ENCODE measurements at regions of chr17 and their contacts with region 1.

Region 1: DNA sequence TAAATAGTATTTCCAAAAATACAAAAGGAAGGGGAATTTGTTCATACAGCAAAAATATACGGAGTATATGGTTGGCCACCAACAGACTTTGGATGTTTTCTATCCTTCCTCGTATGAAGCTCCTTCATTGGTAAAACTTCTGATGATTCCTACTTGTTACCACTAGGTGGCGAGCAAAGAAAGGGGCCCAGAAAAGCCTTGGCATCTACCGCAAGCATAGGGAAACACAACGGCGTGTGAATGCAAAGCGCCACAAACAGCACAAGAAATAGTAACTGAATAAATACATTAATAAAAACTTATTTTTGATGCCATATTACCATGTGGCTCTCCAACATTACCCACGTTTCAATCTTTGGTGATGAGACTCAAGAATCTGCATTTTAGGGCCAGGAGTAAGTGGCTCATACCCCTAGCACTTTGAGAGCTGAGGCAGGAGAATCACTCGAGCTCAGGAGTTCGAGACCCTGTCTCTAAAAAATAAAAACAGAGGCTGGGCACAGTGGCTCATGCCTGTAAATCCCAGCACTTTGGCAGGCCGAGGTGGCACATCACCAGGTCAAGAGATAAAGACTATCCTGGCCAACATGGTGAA is 34.5 kb downstream of the YWHAE start:
- DNase-seq: peak; percentile 46
- ATAC-seq: peak; percentile 81
- H3K4me3 ChIP-seq: no peak overlapping the region
- H3K27ac ChIP-seq: peak overlapping the region; percentile 37; the same call in 1 of the 2 replicates
- H3K4me1 ChIP-seq: peaks cover 33% of the 10 kb centered on the region
- H3K27me3 ChIP-seq: no peaks in the 10 kb centered on the region
- CTCF ChIP-seq: peak; percentile 86 to 91 (median 89)
- EP300 ChIP-seq: no peak
- POLR2A ChIP-seq: no peak
- RAD21 ChIP-seq: peak; percentile 92

Region 2: DNA sequence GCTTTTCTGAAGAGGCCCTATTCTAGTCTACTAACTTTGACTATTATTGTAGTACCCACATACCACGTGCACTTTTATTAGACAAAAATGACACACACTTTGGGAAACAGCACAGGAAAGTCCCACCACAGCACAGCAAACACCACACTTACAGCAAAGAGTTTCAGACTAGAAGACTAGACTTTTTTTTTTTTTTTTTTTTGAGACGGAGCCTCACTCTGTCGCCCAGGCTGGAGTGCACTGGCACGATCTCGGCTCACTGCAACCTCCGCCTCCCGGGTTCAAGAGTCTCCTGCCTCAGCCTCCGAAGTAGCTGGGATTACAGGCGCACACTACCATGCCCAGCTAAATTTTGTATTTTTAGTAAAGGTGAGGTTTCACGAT is 14.4 kb after region 1 on chr17:
- CTCF ChIA-PET with region 1: interaction called, 42 read pairs
- POLR2A ChIA-PET with region 1: interaction called, 7 read pairs
- RAD21 ChIA-PET with region 1: interaction called, 24 read pairs
- SMC1A ChIA-PET with region 1: interaction called, 40 read pairs
- in situ Hi-C with region 1: no loop called
- intact Hi-C with region 1: no loop called
- DNase-seq: peak; percentile 74
- ATAC-seq: peak; percentile 82
- H3K4me3 ChIP-seq: peak overlapping the region; percentile 7; the same call in 1 of the 2 replicates
- H3K27ac ChIP-seq: peak overlapping the region; percentile 58
- H3K4me1 ChIP-seq: peaks cover 63% of the 10 kb centered on the region
- H3K27me3 ChIP-seq: no peaks in the 10 kb centered on the region
- CTCF ChIP-seq: no peak
- EP300 ChIP-seq: no peak; a peak in 2 of 4 replicates
- POLR2A ChIP-seq: no peak
- RAD21 ChIP-seq: no peak

Region 3: DNA sequence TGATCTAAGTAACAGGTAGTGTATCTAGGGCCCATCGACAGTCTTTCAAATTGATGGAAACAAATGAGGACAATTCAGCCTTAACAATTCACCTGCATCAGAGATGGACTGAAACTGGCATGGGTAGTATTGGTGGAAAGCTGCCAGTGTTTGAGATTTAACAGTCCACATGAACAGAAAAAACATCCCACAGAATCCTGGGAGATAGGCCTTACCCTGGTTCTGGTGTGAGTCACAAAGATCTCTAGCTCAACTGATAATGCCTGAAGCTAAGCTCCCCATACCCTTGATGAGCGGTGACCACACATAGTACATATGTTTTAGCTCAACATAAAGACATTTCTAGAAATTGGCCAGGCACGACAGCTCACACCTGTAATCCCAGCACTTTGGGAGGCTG is 68.6 kb after region 1 on chr17:
- CTCF ChIA-PET with region 1: interaction called, 7 read pairs
- POLR2A ChIA-PET with region 1: interaction called, 5 read pairs
- RAD21 ChIA-PET with region 1: interaction called, 11 read pairs
- SMC1A ChIA-PET with region 1: interaction called, 8 read pairs
- in situ Hi-C with region 1: no loop called
- intact Hi-C with region 1: no loop called
- DNase-seq: no peak
- ATAC-seq: no peak
- H3K4me3 ChIP-seq: no peak overlapping the region
- H3K27ac ChIP-seq: no peak overlapping the region
- H3K4me1 ChIP-seq: peaks cover 9% of the 10 kb centered on the region
- H3K27me3 ChIP-seq: no peaks in the 10 kb centered on the region
- CTCF ChIP-seq: no peak
- EP300 ChIP-seq: no peak
- POLR2A ChIP-seq: no peak
- RAD21 ChIP-seq: no peak

Region 4: DNA sequence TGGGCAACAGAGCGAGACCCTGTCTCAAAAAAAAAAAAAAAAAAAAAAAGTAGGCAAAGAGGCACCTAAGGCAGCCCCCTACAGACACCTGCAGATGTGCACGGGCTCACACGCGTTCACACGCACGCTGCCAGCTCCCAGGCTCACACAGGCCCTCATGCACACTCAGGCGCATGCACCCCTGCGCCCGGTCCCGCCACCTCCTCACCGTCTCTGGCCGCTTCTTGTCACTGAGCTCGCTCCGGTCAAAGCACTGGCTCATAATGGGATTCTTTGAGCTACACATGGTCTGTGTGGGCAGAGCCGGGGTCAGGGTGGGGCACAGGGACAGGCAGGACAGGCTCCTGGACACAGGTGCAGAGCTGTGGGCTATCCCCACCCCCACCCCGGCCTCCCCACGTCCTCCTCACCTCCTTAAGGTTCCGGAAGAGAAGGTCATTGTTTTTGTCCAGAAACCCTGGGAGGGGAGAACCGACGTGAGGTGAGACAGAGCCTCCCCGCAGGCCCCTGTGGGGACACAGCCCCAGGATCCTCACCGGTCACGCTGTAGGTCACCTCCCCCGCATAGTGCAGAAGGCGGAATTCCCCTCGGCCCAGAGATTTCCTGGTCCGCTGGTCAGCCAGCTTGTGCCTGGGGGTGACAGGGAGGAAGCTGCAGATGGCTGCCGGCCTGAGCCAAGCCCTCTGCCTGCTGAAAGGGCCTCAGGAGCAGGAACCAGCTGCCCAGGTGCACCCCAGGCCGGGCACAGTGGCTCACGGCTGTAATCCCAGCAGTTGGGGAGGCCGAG is 109.1 kb after region 1 on chr17:
- CTCF ChIA-PET with region 1: interaction called, 14 read pairs
- POLR2A ChIA-PET with region 1: interaction called, 6 read pairs
- RAD21 ChIA-PET with region 1: interaction called, 17 read pairs
- SMC1A ChIA-PET with region 1: interaction called, 10 read pairs
- in situ Hi-C with region 1: no loop called
- intact Hi-C with region 1: no loop called
- DNase-seq: peak; percentile 67
- ATAC-seq: peak; percentile 87
- H3K4me3 ChIP-seq: peak overlapping the region; percentile 63
- H3K27ac ChIP-seq: peak overlapping the region; percentile 54
- H3K4me1 ChIP-seq: peaks cover 27% of the 10 kb centered on the region
- H3K27me3 ChIP-seq: no peaks in the 10 kb centered on the region
- CTCF ChIP-seq: no peak
- EP300 ChIP-seq: peak in 1 of 2 experiments; percentile 59; a peak in 2 of 4 replicates
- POLR2A ChIP-seq: peak; percentile 66
- RAD21 ChIP-seq: no peak

Region 5: DNA sequence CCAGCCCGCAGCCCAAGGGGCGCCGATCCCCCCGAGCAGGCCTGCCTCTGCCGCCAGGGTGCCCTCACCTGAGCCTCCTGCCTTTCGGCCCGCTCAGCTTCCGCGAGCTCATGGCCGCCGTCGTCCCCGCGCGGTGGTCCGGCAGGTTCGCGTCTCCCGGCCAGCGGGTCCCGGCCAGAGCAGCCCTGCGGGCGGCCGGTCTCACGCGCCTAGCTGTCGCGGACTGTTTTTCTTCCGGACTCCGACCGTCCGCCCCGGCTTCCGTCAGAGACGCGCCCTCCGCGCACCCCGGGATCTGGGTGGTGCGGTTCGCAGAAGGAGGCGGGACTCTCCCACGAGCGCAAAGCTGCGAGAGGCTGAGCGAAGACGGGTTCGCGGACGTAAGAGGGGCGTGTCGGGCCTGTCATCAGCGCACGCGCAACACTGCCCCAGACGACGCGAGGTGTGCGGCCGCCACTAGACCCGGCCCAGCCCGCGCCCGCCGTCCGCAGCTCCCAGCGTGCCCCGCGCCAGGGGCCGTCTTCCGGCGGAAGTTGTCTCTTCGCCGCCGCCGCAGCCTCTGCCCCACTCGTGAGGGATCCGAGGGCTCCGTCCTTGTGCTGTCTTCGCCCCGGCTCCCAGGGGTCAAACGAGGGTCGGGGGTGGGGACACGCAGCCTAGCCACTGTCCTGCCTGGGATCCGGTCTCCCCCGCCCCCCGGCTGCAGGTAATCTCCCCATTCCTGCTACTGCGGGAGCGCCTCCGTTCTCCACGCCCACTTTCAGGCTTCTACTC is 151.0 kb after region 1 on chr17 and contains the start of gene INPP5K:
- CTCF ChIA-PET with region 1: interaction called, 132 read pairs
- POLR2A ChIA-PET with region 1: interaction called, 20 read pairs
- RAD21 ChIA-PET with region 1: interaction called, 100 read pairs
- SMC1A ChIA-PET with region 1: interaction called, 95 read pairs
- in situ Hi-C with region 1: no loop called
- intact Hi-C with region 1: loop called (anchors 1 kb)
- DNase-seq: peak; percentile 94
- ATAC-seq: peak; percentile 97
- H3K4me3 ChIP-seq: peak within 1 kb of the TSS; percentile 87
- H3K27ac ChIP-seq: peak within 1 kb of the TSS; percentile 79
- H3K4me1 ChIP-seq: peaks cover 4% of the 10 kb centered on the region
- H3K27me3 ChIP-seq: no peaks in the 10 kb centered on the region
- CTCF ChIP-seq: peak in 1 of 3 experiments; percentile 3; a peak in 1 of 6 replicates
- EP300 ChIP-seq: no peak
- POLR2A ChIP-seq: peak; percentile 91
- RAD21 ChIP-seq: no peak
- polyA plus RNA-seq, gene INPP5K: 0.58 to 1.5 TPM

Region 6: GRCh38 chr17:1573916-1574696 is 208.6 kb after region 1 on chr17:
- CTCF ChIA-PET with region 1: interaction called, 10 read pairs
- POLR2A ChIA-PET with region 1: no interaction called
- RAD21 ChIA-PET with region 1: no interaction called
- SMC1A ChIA-PET with region 1: interaction called, 5 read pairs
- in situ Hi-C with region 1: no loop called
- intact Hi-C with region 1: no loop called
- DNase-seq: no peak
- ATAC-seq: peak; percentile 82
- H3K4me3 ChIP-seq: no peak overlapping the region
- H3K27ac ChIP-seq: no peak overlapping the region
- H3K4me1 ChIP-seq: peaks cover 10% of the 10 kb centered on the region
- H3K27me3 ChIP-seq: no peaks in the 10 kb centered on the region
- CTCF ChIP-seq: peak; percentile 85 to 95 (median 90)
- EP300 ChIP-seq: no peak
- POLR2A ChIP-seq: no peak
- RAD21 ChIP-seq: peak; percentile 92